Left cardiac atrium (tissue), 4 donors: ENCODE measurements at regions of chr1 and their contacts with region 1.

Region 1: DNA sequence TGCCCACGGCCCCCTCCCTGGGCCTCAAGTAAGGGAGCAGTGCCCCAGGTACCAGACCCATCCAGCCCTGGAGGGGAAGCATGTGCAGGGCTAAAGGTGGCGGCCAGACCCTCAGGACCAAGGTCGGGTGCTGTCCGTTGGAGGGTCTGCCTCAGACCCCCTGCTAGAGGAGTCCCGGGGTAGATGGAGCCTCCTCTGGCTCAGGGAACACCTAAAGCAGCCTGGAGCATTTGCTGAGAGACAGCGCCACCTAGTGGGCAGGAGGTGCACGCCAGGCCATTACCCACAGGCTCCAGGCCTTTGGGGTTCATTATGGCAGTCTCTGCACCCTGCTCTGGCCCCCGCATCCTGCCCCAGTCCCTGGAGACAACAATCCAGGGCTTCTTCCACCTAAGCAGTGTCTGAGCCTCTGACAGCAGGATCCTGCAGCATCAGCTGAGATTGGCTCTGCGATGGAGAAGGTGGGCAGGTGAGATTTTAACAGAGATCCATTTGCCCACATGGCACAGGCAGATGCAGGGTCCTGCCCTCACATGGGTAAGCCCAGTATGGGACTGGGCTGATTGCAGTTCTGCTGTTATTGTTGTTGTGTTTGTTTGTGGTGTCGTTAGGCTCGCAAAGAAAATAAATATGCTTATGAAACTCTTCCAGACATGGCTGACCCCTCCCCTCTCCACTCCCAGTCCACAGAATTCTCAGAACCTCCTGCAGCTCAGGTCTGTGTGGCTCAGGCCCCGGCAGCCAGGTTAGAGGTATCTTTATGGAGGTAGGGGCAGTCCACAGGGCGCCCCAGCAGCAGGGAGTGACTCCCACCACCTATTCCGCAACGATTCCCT is 42.4 kb downstream of the CTNNBIP1 start:
- DNase-seq: peak; percentile 80
- ATAC-seq: peak; percentile 88 to 91

Region 2: DNA sequence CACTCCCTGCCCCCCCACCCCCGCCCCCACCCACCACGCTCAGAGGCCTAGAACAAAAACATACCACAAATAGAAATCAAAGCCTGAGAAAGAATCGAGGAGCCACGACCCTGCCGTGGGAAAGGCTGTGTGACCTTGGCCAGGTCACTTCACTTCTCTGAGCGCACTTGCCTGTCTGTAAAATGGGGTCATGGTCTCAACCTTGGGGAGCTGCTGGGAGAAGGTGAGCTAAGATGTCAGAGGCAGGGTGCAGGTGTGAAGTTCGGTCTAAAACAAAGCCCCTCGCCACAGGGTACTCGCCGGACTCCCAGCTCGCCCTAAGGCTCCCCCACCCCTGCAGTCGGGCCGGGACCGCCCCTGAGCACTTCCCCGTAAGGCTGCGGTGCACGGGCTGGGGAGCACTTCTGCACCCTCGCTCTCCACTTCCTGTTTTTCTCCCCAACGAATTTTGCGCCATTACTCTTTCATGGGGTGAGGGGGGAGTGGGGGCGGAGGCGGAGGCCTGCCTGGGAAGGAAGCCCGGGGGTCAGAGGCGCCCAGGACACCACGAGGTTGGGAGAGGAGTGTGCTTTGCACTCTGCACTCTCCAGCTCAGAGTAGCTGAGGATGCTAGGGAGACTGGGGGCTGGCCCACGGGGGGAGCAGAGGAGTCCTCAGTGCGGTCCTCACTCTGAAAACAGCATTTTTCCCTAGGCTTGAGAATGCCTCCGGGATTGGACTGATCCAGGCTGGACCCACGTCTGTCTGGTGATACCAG is 238.0 kb before region 1 on chr1:
- intact Hi-C with region 1: loop called (anchors 2 to 5 kb)
- DNase-seq: peak; percentile 53
- ATAC-seq: peak; percentile 57 to 67

Region 3: GRCh38 chr1:9724706-9725476 is 142.7 kb before region 1 on chr1:
- intact Hi-C with region 1: loop called in 1 of 2 experiments (anchors 10 kb)
- DNase-seq: no peak
- ATAC-seq: peak; percentile 50 to 61

Region 4: GRCh38 chr1:9784508-9785133 is 83.0 kb before region 1 on chr1:
- intact Hi-C with region 1: loop called (anchors 2 to 5 kb)
- DNase-seq: no peak
- ATAC-seq: peak in 1 of 2 donors; percentile 24

Region 5: DNA sequence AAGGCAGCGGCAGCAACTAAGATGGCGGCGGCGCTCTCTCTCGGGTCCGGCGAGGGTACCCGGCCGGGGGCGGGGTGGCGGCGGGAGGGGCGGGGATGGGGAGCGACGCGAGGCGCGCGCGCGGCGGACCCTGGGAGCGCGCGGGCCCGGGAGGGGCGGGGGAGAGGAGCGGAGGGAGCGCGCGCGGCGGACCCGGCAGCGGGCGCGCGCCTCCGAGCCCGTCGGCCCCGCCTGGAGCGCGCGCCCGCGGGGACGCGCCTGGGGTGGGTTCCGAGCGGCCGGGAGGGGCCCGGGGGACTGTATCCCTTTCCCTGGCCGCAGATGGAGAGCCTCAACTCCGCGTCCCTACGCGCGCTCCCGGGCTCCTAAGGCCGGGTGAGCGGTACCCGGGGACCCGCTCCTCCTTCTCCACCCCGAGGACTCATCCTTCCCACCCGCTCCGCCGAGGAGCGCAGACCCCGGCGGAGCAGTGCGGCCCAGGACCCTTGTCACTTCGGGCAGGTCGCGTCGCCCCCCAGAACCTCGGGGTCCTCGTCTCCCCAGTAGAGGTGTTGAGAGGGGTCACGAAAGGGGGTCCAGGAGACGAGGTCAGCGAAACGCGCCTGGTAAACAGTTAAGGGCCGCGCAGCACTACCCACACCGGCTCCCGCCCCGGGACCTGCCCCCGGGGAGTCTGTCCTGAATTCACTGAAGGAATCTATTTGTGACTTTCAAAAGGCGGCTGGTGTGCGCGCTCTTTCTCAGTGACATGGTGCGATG is 43.5 kb before region 1 on chr1 and contains the start of gene CLSTN1:
- intact Hi-C with region 1: no loop called
- DNase-seq: peak; percentile 94
- ATAC-seq: peak; percentile 84 to 94
- total RNA-seq, gene CLSTN1: 62.5 to 64.1 TPM